GM13977 (cell line): ENCODE measurements at regions of chr17 and their contacts with region 1.

Region 1: GRCh38 chr17:56939901-56940343 is 20.9 kb downstream of the COIL start:
- DNase-seq: peak; percentile 71
- CTCF ChIP-seq: peak; percentile 60

Region 2: DNA sequence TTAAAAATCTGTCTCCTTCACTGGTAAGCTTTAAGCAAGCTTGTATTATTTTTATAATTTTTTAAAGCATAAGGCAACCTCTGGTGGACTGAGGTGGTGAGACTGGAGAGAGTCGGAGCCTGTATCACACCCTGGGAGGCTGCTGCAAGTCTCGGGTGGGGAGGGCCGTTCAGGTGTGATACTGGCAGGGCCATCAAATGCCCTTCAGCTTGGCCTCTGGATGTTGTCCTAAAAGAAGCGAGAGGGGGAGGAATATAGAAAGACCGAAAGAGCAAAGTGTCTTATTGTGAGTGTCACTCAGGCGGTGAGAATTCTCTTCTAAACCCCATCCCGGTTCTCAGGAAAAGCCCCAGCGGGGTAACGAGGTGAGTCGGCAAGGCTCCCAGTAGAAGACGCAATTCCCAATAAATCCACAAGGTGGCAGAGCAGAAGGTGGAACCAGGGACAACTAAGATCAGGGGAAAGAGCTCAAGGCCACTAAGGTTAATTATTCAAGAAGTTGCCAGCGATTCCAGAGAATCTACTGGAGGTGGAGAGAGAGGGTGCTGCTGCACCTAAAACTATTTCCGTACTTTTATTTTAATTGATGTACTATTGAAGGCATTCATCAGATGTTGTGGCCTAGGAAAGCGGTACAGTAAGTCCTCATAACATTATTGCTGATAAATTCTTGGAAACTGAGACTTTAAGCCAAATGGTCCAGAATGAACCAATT is 120.3 kb before region 1 on chr17:
- in situ Hi-C with region 1: loop called (anchors 5 kb)
- DNase-seq: peak; percentile 78
- CTCF ChIP-seq: peak; percentile 83